ENCODE measurements at regions of chr13 and their contacts with region 1.

Region 1: DNA sequence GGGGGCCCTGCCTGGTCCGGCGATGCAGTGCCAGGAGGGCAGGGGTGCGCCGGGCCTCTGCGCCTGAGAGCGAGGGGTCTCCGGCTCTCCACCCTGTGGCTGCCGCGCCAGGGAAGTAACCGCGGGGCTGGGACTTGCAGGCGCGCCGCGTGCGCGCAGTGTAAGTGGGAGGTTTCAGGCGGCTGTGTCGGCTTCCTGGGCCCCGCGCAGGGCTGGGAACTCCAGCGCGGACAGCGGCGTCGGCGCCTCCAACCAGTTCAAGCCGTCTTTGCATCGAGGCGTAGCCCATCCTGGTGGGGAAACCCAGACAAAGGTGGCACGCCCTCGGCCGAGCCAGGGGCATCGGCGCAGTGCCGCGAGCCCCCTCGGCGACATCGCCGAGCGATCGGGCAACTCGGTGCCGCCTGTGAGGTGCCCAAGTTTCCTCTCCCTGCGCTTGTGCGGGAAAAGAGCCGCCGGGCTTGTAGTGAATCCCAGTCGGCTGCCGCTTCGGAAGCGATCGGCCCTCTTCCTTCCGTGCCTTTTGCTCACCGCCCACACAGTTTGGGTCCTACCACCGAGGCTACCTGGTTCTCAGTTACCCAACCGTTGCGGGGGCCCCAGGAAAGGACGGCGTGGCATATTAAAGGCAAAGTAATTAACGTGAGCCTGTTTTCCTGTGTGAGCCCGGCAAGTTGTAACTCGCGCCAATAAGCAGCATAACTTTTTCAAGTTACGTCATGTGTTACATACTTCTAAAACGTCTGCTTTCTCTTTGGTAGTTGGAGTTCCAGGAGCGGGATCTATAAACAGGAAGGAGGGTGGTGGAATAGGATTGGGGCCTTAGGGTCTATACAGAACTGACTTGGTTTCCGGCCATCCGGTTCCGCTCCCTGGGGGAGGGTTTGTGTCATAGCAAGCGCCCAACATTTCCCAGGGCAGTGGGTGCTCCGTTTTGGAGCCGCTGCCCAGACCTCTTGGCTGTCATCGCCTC is 1.2 kb downstream of the LRCH1 start:
- DNase-seq: peak; percentile 82
- ATAC-seq: peak; percentile 81 to 86
- H3K4me3 ChIP-seq: peak overlapping the region; percentile 97
- H3K27ac ChIP-seq: peak overlapping the region; percentile 87
- H3K4me1 ChIP-seq: peaks cover 29% of the 10 kb centered on the region
- H3K27me3 ChIP-seq: no peaks in the 10 kb centered on the region
- CTCF ChIP-seq: peak; percentile 50

Region 2: GRCh38 chr13:46716821-46717220 is 162.6 kb after region 1 on chr13:
- intact Hi-C with region 1: loop called (anchors 5 kb)
- DNase-seq: no peak
- ATAC-seq: no peak
- H3K4me3 ChIP-seq: no peak overlapping the region
- H3K27ac ChIP-seq: no peak overlapping the region
- H3K4me1 ChIP-seq: no peaks in the 10 kb centered on the region
- H3K27me3 ChIP-seq: no peaks in the 10 kb centered on the region
- CTCF ChIP-seq: no peak

Region 3: GRCh38 chr13:46893798-46894560 is 339.8 kb after region 1 on chr13:
- intact Hi-C with region 1: no loop called
- DNase-seq: peak; percentile 83
- ATAC-seq: peak; percentile 96 to 97
- H3K4me3 ChIP-seq: peak overlapping the region; percentile 65
- H3K27ac ChIP-seq: peak overlapping the region; percentile 51
- H3K4me1 ChIP-seq: peaks cover 11% of the 10 kb centered on the region
- H3K27me3 ChIP-seq: peaks cover 3% of the 10 kb centered on the region
- CTCF ChIP-seq: peak; percentile 97